Activated naive CD4-positive, alpha-beta T cell treated with anti-CD3 and anti-CD28 coated beads, Interleukin-2, amount 10 ng/mL, durations not matched to agents 7 days and 5 days (primary cell): ENCODE measurements at regions of chr10 and their contacts with region 1.

Region 1: GRCh38 chr10:29998142-29998808 is 61.1 kb downstream of the JCAD start:
- DNase-seq: peak; percentile 87
- H3K4me3 Mint-ChIP-seq: no peak overlapping the region
- H3K27ac Mint-ChIP-seq: no peak overlapping the region
- H3K4me1 Mint-ChIP-seq: peaks cover 6% of the 10 kb centered on the region
- H3K27me3 Mint-ChIP-seq: peaks cover 82% of the 10 kb centered on the region

Region 2: DNA sequence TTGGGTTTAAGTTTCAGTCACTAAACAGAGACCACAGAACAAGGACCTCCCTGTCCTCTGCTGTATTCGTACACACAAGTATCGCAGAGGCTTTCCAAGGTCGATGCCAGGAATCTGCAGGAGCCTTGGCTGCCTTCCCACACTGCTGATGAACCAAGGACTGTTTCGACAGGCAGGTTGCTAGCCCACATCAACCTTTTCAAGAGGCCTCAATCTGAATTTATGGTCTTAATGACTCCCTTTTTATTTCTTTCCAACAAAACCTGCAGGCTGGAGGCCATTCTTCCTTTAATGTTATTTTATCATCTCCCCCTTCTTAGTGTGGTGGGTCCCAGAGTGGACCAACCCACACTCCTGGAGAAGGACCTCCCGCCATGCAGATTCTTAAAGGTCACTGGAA is 15.5 kb after region 1 on chr10:
- CTCF ChIA-PET with region 1: interaction called, 13 read pairs
- DNase-seq: no peak
- H3K4me3 Mint-ChIP-seq: no peak overlapping the region
- H3K27ac Mint-ChIP-seq: no peak overlapping the region
- H3K4me1 Mint-ChIP-seq: no peaks in the 10 kb centered on the region
- H3K27me3 Mint-ChIP-seq: peaks cover 68% of the 10 kb centered on the region

Region 3: DNA sequence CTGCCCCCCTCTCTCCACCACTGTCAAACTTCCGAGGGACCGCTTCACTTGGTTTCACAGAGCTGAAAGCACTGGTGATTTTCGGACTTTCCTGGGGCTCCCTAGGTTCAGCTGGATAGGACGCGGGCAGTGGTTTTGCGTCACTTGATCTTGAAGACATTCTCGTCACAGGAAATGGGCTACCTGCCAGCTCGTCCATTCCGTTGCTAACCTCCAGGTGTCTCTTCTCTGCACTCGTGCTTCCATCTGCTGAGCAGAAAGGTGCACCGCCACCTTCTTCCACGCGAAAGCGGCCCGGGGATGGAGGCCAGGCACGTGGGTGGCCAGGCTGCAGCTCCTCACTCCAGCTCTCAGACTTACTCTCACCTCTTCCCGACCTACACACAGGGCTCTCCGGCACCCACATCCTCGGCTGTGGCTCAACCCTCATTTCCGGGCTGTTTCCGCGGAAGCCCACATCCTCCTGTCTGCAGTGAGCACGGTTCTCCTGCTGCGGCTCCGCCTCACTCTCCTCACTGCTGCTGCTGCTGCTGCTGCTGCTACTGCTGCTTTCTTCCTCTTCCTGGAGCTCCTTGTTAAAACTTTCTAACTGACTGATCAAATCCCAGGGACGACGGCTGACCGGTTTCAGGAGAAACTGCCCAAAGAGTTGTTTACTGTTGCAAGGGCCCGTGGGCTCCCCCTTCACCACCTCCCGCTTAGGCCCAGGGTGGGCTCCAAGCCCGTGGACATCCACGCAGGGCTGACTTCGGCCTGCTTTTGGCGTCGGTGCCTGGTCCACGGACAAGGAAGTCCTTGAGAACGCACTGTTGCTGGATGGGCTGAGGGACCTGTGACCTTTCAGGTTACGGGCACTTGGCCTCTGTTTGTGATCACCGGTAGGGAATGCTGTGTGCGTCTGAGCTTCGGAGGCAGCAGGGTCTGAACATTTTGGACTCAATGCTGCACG is 29.1 kb after region 1 on chr10:
- CTCF ChIA-PET with region 1: interaction called, 10 read pairs
- DNase-seq: peak; percentile 94
- H3K4me3 Mint-ChIP-seq: peak overlapping the region; percentile 68
- H3K27ac Mint-ChIP-seq: peak overlapping the region; percentile 87
- H3K4me1 Mint-ChIP-seq: peaks cover 44% of the 10 kb centered on the region
- H3K27me3 Mint-ChIP-seq: peaks cover 93% of the 10 kb centered on the region

Region 4: GRCh38 chr10:30231071-30231652 is 232.9 kb after region 1 on chr10:
- CTCF ChIA-PET with region 1: interaction called, 15 read pairs
- DNase-seq: peak; percentile 32
- H3K4me3 Mint-ChIP-seq: no peak overlapping the region
- H3K27ac Mint-ChIP-seq: peak overlapping the region; percentile 19
- H3K4me1 Mint-ChIP-seq: peaks cover 29% of the 10 kb centered on the region
- H3K27me3 Mint-ChIP-seq: peaks cover 7% of the 10 kb centered on the region

Region 5: DNA sequence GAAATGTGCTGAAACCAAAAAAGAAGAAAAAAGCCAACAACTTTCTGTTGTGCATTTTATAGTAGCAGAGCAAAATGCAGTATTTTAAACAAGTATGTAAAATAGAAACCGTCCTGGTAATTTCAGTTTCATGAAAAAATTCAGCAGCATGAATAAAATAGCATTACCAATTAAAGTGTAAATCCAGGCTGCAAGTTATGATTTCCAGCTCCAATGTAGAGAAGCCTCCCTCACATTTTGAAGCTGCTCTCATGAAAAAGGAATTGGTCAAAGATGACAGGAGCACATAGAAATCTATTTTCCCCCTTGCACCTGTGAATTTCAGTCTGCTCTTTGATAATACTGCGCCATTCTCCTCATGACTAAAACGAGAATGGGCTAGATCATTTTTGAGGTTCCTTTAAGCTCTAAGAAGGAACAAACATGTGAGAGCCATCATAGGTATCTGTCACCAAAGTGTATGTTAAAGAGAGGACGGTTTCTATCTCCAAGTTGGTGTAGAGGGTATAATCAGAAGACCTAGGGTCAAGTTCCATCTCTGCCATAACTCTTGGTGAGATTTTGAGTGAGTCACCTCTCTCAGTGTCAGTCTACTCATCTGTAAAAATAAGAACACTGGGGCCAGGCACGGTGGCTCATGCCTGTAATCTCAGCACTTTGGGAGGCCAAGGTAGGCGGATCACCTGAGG is 243.3 kb after region 1 on chr10:
- CTCF ChIA-PET with region 1: interaction called, 105 read pairs
- DNase-seq: no peak
- H3K4me3 Mint-ChIP-seq: no peak overlapping the region
- H3K27ac Mint-ChIP-seq: no peak overlapping the region
- H3K4me1 Mint-ChIP-seq: peaks cover 2% of the 10 kb centered on the region
- H3K27me3 Mint-ChIP-seq: peaks cover 14% of the 10 kb centered on the region

Region 6: GRCh38 chr10:30359373-30360206 is 361.3 kb after region 1 on chr10:
- CTCF ChIA-PET with region 1: interaction called, 12 read pairs
- DNase-seq: peak; percentile 77
- H3K4me3 Mint-ChIP-seq: no peak overlapping the region
- H3K27ac Mint-ChIP-seq: no peak overlapping the region
- H3K4me1 Mint-ChIP-seq: peaks cover 9% of the 10 kb centered on the region
- H3K27me3 Mint-ChIP-seq: peaks cover 38% of the 10 kb centered on the region

Region 7: GRCh38 chr10:30384701-30385201 is 386.5 kb after region 1 on chr10:
- CTCF ChIA-PET with region 1: interaction called, 21 read pairs
- DNase-seq: peak; percentile 35
- H3K4me3 Mint-ChIP-seq: no peak overlapping the region
- H3K27ac Mint-ChIP-seq: no peak overlapping the region
- H3K4me1 Mint-ChIP-seq: no peaks in the 10 kb centered on the region
- H3K27me3 Mint-ChIP-seq: peaks cover 50% of the 10 kb centered on the region